Caco-2 (cell line): ENCODE measurements at regions of chr2 and their contacts with region 1.

Region 1: GRCh38 chr2:197310271-197310985 is at the start of gene ANKRD44:
- DNase-seq: peak; percentile 75 to 83
- H3K4me3 ChIP-seq: peak within 1 kb of the TSS; percentile 67
- H3K4me3 Mint-ChIP-seq: peak within 1 kb of the TSS; percentile 78
- H3K27ac Mint-ChIP-seq: no peak within 1 kb of the TSS
- H3K4me1 ChIP-seq: peaks cover 8% of the 10 kb centered on the region; the same call in 1 of the 2 replicates
- H3K4me1 Mint-ChIP-seq: peaks cover 8% of the 10 kb centered on the region
- H3K27me3 ChIP-seq: no peaks in the 10 kb centered on the region
- H3K27me3 Mint-ChIP-seq: peaks cover 17% of the 10 kb centered on the region
- CTCF ChIP-seq: peak in 1 of 2 experiments; percentile 11
- total RNA-seq, gene ANKRD44: 1.0 and 3.1 TPM in 2 replicates

Region 2: GRCh38 chr2:197191177-197191939 is 119.1 kb before region 1 on chr2:
- CTCF ChIA-PET with region 1: no interaction called
- POLR2A ChIA-PET with region 1: no interaction called
- intact Hi-C with region 1: loop called (anchors 1 kb)
- DNase-seq: peak in 1 of 2 experiments; percentile 46
- H3K4me3 ChIP-seq: no peak overlapping the region
- H3K4me3 Mint-ChIP-seq: no peak overlapping the region
- H3K27ac Mint-ChIP-seq: no peak overlapping the region
- H3K4me1 ChIP-seq: no peaks in the 10 kb centered on the region
- H3K4me1 Mint-ChIP-seq: no peaks in the 10 kb centered on the region
- H3K27me3 ChIP-seq: peaks cover 1% of the 10 kb centered on the region; the same call in 1 of the 2 replicates
- H3K27me3 Mint-ChIP-seq: peaks cover 12% of the 10 kb centered on the region
- CTCF ChIP-seq: peak; percentile 47 to 66